ENCODE measurements at regions of chr4 and their contacts with region 1.

Region 1: DNA sequence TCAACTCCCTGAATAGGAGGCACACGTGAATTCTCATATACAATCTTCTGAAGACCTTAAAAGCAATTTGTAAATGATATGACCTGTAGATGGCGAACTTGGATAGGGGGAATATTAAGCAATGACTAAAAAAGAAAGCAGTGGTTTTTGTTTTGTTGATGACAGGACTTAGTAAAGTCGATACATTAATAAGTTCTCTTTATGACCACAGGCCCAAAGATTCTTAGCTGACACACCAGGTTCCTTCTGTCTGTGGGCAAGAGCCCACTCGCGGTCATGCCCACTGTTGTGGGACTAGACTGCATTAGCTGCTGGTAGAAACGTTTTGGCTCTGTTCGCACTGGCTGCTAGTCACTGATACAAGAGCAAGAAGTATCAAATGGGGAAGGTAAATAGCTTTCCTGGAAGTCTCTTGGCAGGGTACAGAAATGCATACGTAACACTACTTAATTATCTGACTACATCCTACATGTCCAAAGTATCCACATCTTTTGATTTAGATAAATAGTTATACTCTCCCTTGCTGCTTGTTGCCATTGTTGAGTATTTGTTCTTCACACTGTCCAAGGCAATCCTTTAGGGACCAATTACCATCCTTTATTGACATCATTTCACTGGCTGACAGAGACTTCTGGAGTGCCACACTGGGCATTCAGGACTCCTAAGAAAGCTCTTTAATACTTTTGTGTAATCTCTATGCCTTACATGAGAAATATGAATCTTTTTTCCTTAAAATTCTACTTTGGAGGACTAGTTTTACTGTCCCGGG is 31.0 kb downstream of the ALPK1 start:
- DNase-seq: no peak
- H3K4me3 Mint-ChIP-seq: no peak overlapping the region
- H3K27ac Mint-ChIP-seq: no peak overlapping the region
- H3K4me1 Mint-ChIP-seq: peaks cover 8% of the 10 kb centered on the region
- H3K27me3 Mint-ChIP-seq: no peaks in the 10 kb centered on the region

Region 2: DNA sequence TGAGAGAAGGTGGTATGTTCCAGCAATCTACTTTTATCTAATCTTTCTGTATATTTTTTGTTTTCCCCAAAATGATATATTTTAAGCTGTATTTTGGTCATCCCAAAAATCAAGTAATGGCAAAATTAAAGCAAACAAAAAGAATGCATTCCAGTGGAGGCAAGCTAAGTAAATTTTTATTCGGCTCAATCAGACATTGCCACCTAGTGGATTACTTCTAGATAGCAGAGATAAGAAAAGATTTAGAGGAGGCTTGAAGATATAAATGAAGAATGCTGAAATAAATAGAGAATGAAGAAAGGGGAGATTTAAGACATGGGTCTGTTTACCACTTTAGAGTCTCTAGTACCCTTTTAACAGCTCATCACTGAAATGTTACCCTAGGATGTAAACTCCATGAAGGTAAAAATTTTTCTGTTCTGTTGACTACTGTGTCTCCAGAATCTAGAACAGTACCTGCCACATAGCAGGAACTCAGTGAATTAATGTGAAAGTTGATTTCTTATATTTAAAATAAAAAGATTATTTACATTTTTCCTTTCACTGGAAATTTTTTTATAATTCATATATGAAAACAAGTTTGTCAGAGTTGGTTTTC is 610.4 kb after region 1 on chr4:
- intact Hi-C with region 1: loop called (anchors 5 kb)
- DNase-seq: no peak
- H3K4me3 Mint-ChIP-seq: no peak overlapping the region
- H3K27ac Mint-ChIP-seq: no peak overlapping the region
- H3K4me1 Mint-ChIP-seq: no peaks in the 10 kb centered on the region
- H3K27me3 Mint-ChIP-seq: no peaks in the 10 kb centered on the region

Region 3: DNA sequence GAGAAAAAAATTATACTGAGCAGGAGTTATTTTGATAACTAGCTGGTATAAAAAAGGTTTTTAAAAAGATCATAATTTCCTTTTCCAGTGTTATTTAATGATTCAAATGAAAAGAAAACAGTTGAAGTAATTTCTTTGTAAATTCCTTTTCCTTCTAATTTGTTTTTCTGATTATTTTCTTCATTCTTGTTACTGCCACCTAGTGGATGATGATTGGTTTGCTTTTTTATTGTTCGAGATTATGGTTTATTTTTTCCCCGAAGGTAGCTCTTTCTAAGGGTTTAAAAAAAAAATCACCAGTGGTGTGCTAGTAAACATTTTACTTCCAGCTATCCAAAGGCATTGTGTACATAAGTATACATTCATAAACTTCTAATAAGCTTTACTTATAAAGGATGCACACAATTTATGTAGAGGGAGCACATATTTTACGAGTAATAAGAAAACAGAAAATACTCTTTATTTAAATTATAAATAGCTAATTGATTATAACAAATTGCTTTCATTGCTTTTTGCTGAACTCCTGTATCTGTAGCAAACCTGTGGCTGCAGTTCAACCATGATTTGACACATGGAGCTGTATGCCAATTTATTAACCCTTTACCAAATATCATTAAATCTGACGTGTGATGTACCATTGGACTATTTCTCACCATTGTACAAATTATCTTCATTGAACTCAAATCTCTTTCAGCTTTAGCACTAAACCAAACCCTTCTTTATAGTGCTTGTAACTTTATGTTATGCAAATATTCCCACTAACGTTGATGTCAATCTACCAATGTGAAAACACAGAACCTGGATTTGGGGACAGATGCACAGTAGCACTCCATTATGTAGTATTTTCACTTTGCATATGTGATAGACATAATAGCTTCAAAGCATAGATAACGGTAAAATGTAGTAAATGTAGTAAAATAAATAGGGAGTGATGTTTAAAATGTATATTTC is 623.5 kb after region 1 on chr4:
- intact Hi-C with region 1: loop called (anchors 5 kb)
- DNase-seq: no peak
- H3K4me3 Mint-ChIP-seq: no peak overlapping the region
- H3K27ac Mint-ChIP-seq: no peak overlapping the region
- H3K4me1 Mint-ChIP-seq: no peaks in the 10 kb centered on the region
- H3K27me3 Mint-ChIP-seq: no peaks in the 10 kb centered on the region

Measured in activated T-helper 1 cell treated with anti-CD3 and anti-CD28 coated beads, Interleukin-12 subunit alpha, Interleukin-12 subunit beta, Interleukin-2, Interleukin-4 antibody, amounts not matched to agents 30 ng/mL and 10 ng/mL and 1 ng/mL, durations not matched to agents 14 hours and 24 hours and 36 hours (primary cell).